ENCODE measurements at regions of chr11 and their contacts with region 1.

Region 1: DNA sequence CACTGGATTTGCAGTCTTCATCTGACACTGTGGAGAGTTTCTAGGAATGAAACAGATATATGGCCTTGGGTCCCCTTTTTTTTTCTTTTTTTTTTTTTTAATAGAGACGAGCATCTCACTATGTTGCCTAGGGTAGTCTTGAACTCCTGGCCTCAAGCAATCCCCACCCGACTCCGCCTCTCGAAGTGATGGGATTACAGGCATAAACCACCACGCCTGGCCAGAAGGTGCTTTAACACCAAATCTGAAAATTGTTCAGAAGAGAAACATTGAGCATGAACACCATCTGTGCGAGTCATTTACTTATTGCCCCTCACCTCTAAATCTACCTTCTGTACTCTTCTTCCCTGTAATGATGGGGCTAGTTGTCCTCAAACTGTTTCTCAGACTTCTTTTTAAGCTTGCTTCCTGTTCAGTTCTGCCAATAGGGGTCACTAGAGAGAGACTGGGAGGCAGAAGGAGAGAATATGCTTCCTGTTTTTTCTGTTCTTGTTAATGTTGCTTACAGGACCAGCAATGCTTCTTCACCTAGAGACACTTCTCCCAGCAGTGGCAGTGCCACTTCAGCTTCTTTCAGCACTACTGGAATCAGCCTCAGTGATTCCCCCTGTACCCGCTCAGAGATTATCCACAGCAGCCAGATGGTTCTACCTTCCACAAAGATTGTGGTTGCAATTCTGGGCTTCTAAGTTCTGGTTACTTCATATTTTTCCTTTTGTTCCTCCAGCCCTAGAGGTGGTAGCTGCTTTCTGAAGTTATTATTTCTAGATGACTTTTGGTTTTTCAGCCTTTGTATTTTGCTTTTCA is 20.8 kb upstream of the ZBED5 start:
- DNase-seq: no peak
- H3K4me3 Mint-ChIP-seq: no peak overlapping the region
- H3K27ac Mint-ChIP-seq: no peak overlapping the region
- H3K4me1 Mint-ChIP-seq: peaks cover 9% of the 10 kb centered on the region
- H3K27me3 Mint-ChIP-seq: no peaks in the 10 kb centered on the region

Region 2: GRCh38 chr11:10857709-10858438 is 20.7 kb before region 1 on chr11 and contains the start of gene ZBED5:
- CTCF ChIA-PET with region 1: interaction called, 9 read pairs
- POLR2A ChIA-PET with region 1: interaction called, 11 read pairs
- DNase-seq: peak; percentile 98
- H3K4me3 Mint-ChIP-seq: peak within 1 kb of the TSS; percentile 100
- H3K27ac Mint-ChIP-seq: peak within 1 kb of the TSS; percentile 100
- H3K4me1 Mint-ChIP-seq: peaks cover 45% of the 10 kb centered on the region
- H3K27me3 Mint-ChIP-seq: no peaks in the 10 kb centered on the region
- total RNA-seq, gene ZBED5: 44.2 to 45.6 TPM

Measured in activated CD4-positive, alpha-beta memory T cell treated with anti-CD3 and anti-CD28 coated beads, Interleukin-2, amount 10 ng/mL, durations not matched to agents 7 days and 5 days (primary cell).